Panc1 (cell line): ENCODE measurements at regions of chr10 and their contacts with region 1.

Region 1: DNA sequence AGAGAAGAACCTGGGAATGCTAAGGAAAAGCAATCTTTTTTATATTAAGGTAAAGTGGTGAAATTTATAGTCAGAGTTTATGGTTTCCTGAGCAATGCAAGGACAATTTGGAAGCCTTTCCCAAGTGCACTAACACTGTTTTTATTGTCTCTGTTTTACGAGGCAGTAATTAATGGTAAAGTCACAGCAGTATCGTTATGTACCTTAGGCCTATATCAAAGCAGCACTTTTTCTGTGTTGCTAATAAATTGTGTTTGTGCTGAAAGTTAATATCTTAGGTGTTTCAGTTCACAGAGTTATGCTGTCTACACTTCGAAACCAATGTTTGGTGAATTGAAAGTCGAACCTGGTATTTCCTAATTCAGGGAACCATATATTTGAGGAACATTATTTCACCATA is 19.2 kb downstream of the OIT3 start:
- DNase-seq: no peak
- ATAC-seq: no peak
- H3K4me3 ChIP-seq: no peak overlapping the region
- H3K27ac ChIP-seq: no peak overlapping the region
- H3K4me1 ChIP-seq: no peaks in the 10 kb centered on the region
- H3K27me3 ChIP-seq: no peaks in the 10 kb centered on the region
- CTCF ChIP-seq: no peak

Region 2: DNA sequence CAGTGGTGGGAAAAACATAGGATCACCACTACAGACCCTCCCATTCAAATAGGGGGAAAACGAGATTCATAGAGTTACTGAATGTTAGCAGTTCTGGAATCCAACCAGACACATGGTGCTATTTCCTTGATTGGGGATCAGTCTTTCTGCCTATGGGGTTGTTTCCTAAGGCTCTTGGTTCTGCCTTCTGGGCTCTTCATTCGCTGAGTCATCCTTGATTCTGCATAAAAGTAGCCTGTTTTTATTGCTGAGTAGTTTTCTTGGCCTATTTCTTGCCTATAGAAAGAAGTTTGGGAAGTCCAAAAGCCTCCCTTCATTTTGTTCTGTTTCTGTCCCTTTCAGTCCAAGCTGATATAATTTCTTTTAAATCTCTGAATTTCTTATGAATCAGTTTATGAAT is 118.5 kb before region 1 on chr10:
- CTCF ChIA-PET with region 1: no interaction called
- POLR2A ChIA-PET with region 1: no interaction called
- in situ Hi-C with region 1: no loop called
- intact Hi-C with region 1: no loop called
- DNase-seq: no peak
- ATAC-seq: no peak
- H3K4me3 ChIP-seq: no peak overlapping the region
- H3K27ac ChIP-seq: no peak overlapping the region
- H3K4me1 ChIP-seq: no peaks in the 10 kb centered on the region; the same call in 1 of the 2 replicates
- H3K27me3 ChIP-seq: no peaks in the 10 kb centered on the region
- CTCF ChIP-seq: no peak

Region 3: DNA sequence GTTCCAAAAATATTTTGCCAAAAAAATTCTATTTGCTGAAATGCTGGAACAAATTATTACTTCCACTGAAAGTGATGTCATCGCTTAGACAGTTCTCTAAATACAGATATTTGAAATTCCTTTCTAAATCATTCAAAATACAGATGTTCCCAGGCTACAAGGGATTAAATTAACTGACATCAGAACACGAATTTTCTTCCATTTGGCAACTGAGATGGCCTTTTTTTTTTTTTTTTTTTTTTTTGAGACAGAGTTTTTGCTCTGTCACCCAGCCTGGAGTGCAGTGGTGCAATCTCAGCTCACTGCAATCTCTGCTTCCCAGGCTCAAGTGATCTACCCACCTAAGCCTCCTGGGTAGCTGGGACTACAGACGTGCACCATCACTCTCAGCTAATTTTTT is 126.9 kb after region 1 on chr10:
- CTCF ChIA-PET with region 1: no interaction called
- POLR2A ChIA-PET with region 1: interaction called, 17 read pairs
- in situ Hi-C with region 1: no loop called
- intact Hi-C with region 1: no loop called
- DNase-seq: no peak
- ATAC-seq: no peak
- H3K4me3 ChIP-seq: no peak overlapping the region
- H3K27ac ChIP-seq: no peak overlapping the region
- H3K4me1 ChIP-seq: peaks cover 5% of the 10 kb centered on the region
- H3K27me3 ChIP-seq: no peaks in the 10 kb centered on the region
- CTCF ChIP-seq: no peak

Region 4: DNA sequence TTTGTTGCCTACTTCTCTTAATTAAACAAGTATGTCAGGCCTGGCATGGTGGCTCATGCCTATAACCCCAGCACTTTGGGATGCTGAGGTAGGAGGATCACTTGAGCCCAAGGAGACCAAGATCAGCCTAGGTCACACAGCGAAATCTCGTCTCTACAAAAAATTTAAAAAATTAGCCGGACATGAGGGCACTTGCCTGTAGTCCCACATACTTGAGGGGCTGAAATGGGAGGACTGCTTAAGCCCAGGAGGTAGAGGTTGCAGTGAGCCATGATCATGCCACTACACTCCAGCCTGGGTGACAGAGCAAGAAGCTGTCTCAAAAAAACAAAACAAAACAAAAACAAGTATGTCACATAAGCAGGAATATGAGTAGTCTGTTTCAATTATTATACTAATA is 135.0 kb after region 1 on chr10:
- CTCF ChIA-PET with region 1: no interaction called
- POLR2A ChIA-PET with region 1: interaction called, 10 read pairs
- in situ Hi-C with region 1: no loop called
- intact Hi-C with region 1: no loop called
- DNase-seq: no peak
- ATAC-seq: no peak
- H3K4me3 ChIP-seq: no peak overlapping the region
- H3K27ac ChIP-seq: no peak overlapping the region
- H3K4me1 ChIP-seq: peaks cover 8% of the 10 kb centered on the region
- H3K27me3 ChIP-seq: no peaks in the 10 kb centered on the region
- CTCF ChIP-seq: no peak